ENCODE measurements at regions of chr10 and their contacts with region 1.

Region 1: GRCh38 chr10:25016376-25017154 is at the start of gene THNSL1:
- DNase-seq: peak; percentile 93 to 99 (median 98)
- ATAC-seq: peak; percentile 94
- H3K4me3 ChIP-seq: peak within 1 kb of the TSS; percentile 69 to 76
- H3K4me3 Mint-ChIP-seq: peak within 1 kb of the TSS; percentile 93
- H3K27ac ChIP-seq: peak within 1 kb of the TSS; percentile 82 to 91
- H3K27ac Mint-ChIP-seq: peak within 1 kb of the TSS; percentile 95
- H3K4me1 ChIP-seq: peaks cover 18% of the 10 kb centered on the region
- H3K4me1 Mint-ChIP-seq: peaks cover 35% of the 10 kb centered on the region
- H3K27me3 ChIP-seq: no peaks in the 10 kb centered on the region
- H3K27me3 Mint-ChIP-seq: no peaks in the 10 kb centered on the region
- CTCF ChIP-seq: no peak
- total RNA-seq, gene THNSL1: 0.53 to 0.71 TPM

Region 2: DNA sequence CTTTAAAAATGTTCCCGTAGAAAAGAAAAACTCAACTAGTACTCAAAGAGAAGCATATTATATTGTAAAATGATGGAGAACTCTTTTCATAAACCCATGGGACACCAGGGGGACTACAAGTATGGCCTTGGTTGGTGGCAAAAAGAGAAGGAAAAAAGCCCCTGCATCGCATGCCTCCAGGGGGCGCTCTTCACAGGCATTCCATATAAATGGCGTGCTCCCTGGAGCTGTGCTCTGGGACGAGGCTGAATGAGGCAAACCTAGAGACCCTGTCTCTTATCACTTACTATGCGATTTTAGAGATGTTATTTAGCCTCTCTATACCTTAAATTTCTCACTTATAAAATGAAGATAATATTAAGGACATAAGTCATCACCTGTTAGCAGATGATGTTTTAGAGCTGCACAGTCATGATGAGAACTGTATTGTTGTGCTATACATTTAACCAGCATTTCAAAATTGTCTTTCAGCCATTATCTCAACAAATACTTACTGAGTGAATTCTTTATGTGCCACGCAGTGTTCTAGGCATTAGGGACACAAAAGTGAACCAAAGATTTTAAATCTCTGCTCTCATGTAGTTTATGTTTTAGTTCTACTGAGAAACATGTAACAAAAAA is 398.7 kb before region 1 on chr10:
- CTCF ChIA-PET with region 1: interaction called, 4 read pairs
- POLR2A ChIA-PET with region 1: interaction called, 19 read pairs
- intact Hi-C with region 1: loop called in 1 of 2 experiments (anchors 5 kb)
- DNase-seq: peak in 7 of 9 experiments; percentile 3 to 72 (median 50)
- ATAC-seq: no peak
- H3K4me3 ChIP-seq: no peak overlapping the region
- H3K4me3 Mint-ChIP-seq: no peak overlapping the region
- H3K27ac ChIP-seq: no peak overlapping the region
- H3K27ac Mint-ChIP-seq: peak overlapping the region; percentile 58
- H3K4me1 ChIP-seq: peaks cover 9% of the 10 kb centered on the region
- H3K4me1 Mint-ChIP-seq: peaks cover 29% of the 10 kb centered on the region
- H3K27me3 ChIP-seq: no peaks in the 10 kb centered on the region
- H3K27me3 Mint-ChIP-seq: no peaks in the 10 kb centered on the region
- CTCF ChIP-seq: peak; percentile 67

Region 3: DNA sequence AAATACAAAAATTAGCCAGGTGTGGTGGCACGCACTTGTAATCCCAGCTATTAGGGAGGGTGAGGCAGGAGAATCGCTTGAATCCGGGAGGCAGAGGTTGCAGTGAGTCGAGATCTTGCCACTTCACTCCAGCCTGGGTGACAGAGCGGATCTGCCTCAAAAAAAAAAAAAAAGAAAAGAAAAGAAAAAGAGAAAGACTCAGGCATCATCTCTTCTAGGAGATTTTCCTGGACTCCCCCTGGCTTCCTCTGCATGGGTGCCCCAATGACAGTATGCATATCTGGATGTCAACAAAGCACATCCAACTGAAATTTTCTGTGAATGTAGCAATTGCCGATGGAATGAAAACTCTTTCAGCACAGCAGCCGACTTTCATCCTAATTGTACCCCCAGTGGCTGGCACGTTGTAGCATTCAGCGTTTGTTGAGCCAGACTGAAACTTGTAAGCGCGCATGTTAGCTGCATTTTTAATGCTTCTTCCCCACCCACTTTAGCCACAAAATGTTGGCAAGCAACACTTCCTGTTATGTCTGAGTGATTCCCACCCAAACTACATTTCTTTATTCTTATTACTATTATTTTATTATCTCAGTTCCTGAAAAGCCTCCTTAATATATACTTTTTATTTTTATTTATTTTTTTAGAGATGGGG is 134.4 kb before region 1 on chr10:
- CTCF ChIA-PET with region 1: no interaction called
- POLR2A ChIA-PET with region 1: no interaction called
- intact Hi-C with region 1: loop called (anchors 2 to 5 kb)
- DNase-seq: peak; percentile 29 to 86 (median 59)
- ATAC-seq: peak; percentile 84
- H3K4me3 ChIP-seq: peak overlapping the region; percentile 23 to 48
- H3K4me3 Mint-ChIP-seq: peak overlapping the region; percentile 86
- H3K27ac ChIP-seq: peak overlapping the region; percentile 44 to 46
- H3K27ac Mint-ChIP-seq: peak overlapping the region; percentile 96
- H3K4me1 ChIP-seq: peaks cover 59% of the 10 kb centered on the region
- H3K4me1 Mint-ChIP-seq: peaks cover 66% of the 10 kb centered on the region
- H3K27me3 ChIP-seq: no peaks in the 10 kb centered on the region
- H3K27me3 Mint-ChIP-seq: no peaks in the 10 kb centered on the region
- CTCF ChIP-seq: no peak

Region 4: DNA sequence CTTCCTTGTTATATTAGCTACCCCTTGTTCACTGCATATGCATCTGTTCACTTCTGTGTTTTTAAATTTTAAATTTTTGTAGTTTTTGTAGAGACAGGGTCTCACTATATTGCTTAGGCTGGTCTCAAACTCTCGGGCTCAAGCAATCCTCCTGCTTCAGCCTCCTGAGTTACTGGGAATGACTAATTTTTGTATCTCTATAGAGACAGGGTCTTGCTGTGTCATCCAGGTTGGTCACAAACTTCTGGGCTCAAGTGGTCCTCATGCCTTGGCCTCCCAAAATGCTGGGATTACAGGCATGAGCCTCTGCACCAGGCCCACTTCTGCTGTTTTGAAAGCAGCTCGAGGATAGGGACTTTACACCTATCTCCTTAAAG is 128.7 kb before region 1 on chr10:
- CTCF ChIA-PET with region 1: no interaction called
- POLR2A ChIA-PET with region 1: no interaction called
- intact Hi-C with region 1: loop called (anchors 2 to 5 kb)
- DNase-seq: no peak
- ATAC-seq: no peak
- H3K4me3 ChIP-seq: peak overlapping the region in 1 of 2 experiments; percentile 28
- H3K4me3 Mint-ChIP-seq: peak overlapping the region; percentile 63
- H3K27ac ChIP-seq: peak overlapping the region; percentile 3 to 73
- H3K27ac Mint-ChIP-seq: peak overlapping the region; percentile 87
- H3K4me1 ChIP-seq: peaks cover 60% of the 10 kb centered on the region
- H3K4me1 Mint-ChIP-seq: peaks cover 79% of the 10 kb centered on the region
- H3K27me3 ChIP-seq: no peaks in the 10 kb centered on the region
- H3K27me3 Mint-ChIP-seq: no peaks in the 10 kb centered on the region
- CTCF ChIP-seq: no peak

Region 5: DNA sequence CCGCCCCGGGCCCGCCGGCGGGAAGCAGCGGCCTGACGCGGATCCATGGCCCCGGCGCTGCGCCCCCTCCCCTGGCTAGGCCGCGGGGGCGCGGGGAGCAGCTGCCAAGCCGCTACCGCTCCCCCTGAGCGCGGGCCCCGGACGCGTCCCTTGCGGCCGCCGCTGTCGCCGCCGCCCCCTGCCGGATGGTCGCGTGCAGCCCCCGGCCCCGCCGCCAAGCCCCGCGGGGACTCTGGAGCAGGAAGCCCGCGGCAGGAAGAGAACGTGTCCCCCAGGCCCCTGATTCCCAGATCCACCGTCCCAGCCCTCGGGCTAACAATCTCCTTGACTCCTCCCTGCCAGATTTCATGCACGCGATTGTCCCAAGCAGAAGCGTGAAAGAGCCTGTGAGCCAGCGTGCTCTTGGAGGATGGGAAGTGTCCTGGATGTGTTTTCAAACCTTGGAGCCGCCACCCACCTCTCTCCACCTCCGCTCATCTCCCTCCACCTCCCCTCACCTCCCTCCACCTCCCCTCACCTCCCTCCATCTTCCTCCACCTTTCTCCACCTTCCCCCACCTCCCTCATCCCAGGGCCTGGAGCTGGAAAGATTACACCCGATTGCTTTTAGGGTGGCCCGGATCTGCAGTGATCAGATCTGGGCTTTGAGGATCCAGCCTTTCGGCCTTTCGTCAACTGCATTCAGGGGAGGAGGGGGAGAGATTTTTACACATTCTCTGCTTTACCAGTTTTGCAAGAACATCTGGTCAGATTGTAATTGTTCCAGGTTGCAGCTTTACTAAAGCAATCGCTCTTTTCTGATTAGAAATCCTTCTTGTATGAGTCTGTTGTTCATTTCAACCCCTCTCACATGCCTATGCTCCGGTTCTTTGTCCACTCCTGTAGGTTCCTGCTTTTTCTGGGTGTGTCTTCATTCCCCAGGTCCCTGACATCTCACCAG is 63.6 kb before region 1 on chr10:
- CTCF ChIA-PET with region 1: no interaction called
- POLR2A ChIA-PET with region 1: no interaction called
- intact Hi-C with region 1: loop called (anchors 2 to 5 kb)
- DNase-seq: peak; percentile 25 to 84 (median 60)
- ATAC-seq: peak; percentile 82
- H3K4me3 ChIP-seq: peak overlapping the region; percentile 63 to 77
- H3K4me3 Mint-ChIP-seq: peak overlapping the region; percentile 82
- H3K27ac ChIP-seq: peak overlapping the region; percentile 31 to 35
- H3K27ac Mint-ChIP-seq: peak overlapping the region; percentile 84
- H3K4me1 ChIP-seq: peaks cover 15% of the 10 kb centered on the region
- H3K4me1 Mint-ChIP-seq: peaks cover 18% of the 10 kb centered on the region
- H3K27me3 ChIP-seq: no peaks in the 10 kb centered on the region
- H3K27me3 Mint-ChIP-seq: no peaks in the 10 kb centered on the region
- CTCF ChIP-seq: peak; percentile 63

Region 6: GRCh38 chr10:25047591-25048301 is 31.2 kb after region 1 on chr10:
- CTCF ChIA-PET with region 1: no interaction called
- POLR2A ChIA-PET with region 1: no interaction called
- intact Hi-C with region 1: no loop called
- DNase-seq: no peak
- ATAC-seq: no peak
- H3K4me3 ChIP-seq: no peak overlapping the region
- H3K4me3 Mint-ChIP-seq: no peak overlapping the region
- H3K27ac ChIP-seq: no peak overlapping the region
- H3K27ac Mint-ChIP-seq: no peak overlapping the region
- H3K4me1 ChIP-seq: no peaks in the 10 kb centered on the region
- H3K4me1 Mint-ChIP-seq: no peaks in the 10 kb centered on the region
- H3K27me3 ChIP-seq: no peaks in the 10 kb centered on the region
- H3K27me3 Mint-ChIP-seq: peaks cover 28% of the 10 kb centered on the region
- CTCF ChIP-seq: no peak

Region 7: DNA sequence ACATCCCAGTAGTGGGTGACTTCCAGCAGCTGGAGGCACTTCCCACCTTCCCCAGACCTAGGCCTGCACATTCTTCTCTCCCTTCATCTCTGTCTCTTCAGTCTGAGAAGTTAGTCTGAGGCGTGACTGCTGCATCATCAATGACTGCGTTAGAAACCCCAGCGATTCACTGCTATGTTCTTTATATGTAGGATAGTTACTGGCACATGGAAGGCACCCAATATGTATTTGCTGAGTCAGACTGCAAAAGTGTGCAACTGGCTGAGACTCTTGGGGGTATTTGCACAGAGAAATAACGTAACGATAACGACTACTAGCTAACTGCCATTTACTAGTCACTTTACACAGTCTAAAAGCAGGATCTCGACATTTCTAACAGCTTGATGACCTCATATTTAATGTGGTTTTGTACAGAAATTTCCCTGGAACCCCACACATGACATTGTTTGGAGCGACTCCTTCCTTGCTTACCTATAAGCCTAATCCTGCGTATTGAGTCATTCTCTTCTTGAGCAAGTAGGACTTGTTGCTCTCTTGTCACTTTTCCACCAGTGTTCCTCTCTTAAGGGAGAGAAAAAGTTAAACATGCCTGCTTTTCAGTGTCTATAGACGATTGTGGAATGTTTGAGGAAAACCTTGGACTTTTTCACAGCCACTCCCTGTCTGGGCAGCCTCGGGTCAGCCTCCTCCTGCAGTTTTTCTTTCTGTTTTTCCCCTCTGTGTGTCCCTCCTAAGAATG is 45.3 kb after region 1 on chr10:
- CTCF ChIA-PET with region 1: no interaction called
- POLR2A ChIA-PET with region 1: no interaction called
- intact Hi-C with region 1: loop called in 1 of 2 experiments (anchors 1 kb)
- DNase-seq: no peak
- ATAC-seq: no peak
- H3K4me3 ChIP-seq: no peak overlapping the region
- H3K4me3 Mint-ChIP-seq: no peak overlapping the region
- H3K27ac ChIP-seq: peak overlapping the region in 1 of 2 experiments; percentile 29
- H3K27ac Mint-ChIP-seq: peak overlapping the region; percentile 8
- H3K4me1 ChIP-seq: peaks cover 7% of the 10 kb centered on the region
- H3K4me1 Mint-ChIP-seq: peaks cover 14% of the 10 kb centered on the region
- H3K27me3 ChIP-seq: no peaks in the 10 kb centered on the region
- H3K27me3 Mint-ChIP-seq: peaks cover 2% of the 10 kb centered on the region
- CTCF ChIP-seq: no peak

Region 8: DNA sequence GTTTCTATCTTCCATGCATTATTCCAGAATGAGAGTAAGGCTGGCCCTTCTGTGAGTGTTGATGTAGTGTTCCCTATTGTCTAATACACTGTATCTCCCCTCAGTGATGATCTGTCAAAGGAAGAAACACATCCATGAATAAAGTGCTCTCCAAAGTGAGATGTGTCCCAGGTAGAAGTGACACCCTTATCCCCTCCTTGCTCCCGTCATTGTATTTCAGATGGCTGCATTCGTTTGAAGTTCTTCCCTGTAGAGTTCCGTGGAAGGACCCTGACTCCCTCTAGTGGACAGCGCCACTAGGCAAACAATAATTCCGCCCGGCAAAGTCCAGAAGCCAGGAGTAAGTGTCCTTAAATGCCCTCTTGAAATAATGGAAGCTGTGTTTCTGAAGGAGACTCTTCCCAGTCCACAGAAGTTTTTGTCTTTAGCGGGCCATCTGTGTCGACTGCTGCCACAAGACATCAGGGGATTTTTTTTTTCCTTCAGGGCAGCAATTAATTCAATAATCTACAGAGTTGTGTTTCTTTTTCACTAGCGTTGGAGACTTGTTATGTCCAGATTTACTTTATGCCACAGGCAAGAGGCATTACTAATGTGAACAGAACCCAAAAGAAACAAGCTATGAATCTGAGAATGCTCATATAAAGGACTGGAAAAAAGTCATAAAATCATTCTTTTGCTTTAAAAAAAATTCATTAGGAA is 64.5 kb after region 1 on chr10:
- CTCF ChIA-PET with region 1: no interaction called
- POLR2A ChIA-PET with region 1: no interaction called
- intact Hi-C with region 1: loop called in 1 of 2 experiments (anchors 2 kb)
- DNase-seq: peak; percentile 15 to 73 (median 60)
- ATAC-seq: peak; percentile 51
- H3K4me3 ChIP-seq: no peak overlapping the region
- H3K4me3 Mint-ChIP-seq: no peak overlapping the region
- H3K27ac ChIP-seq: no peak overlapping the region
- H3K27ac Mint-ChIP-seq: no peak overlapping the region
- H3K4me1 ChIP-seq: no peaks in the 10 kb centered on the region
- H3K4me1 Mint-ChIP-seq: peaks cover 3% of the 10 kb centered on the region
- H3K27me3 ChIP-seq: no peaks in the 10 kb centered on the region
- H3K27me3 Mint-ChIP-seq: peaks cover 7% of the 10 kb centered on the region
- CTCF ChIP-seq: peak; percentile 71